Activated CD4-positive, alpha-beta memory T cell treated with anti-CD3 and anti-CD28 coated beads for 36 hours (primary cell): ENCODE measurements at regions of chr14 and their contacts with region 1.

Region 1: DNA sequence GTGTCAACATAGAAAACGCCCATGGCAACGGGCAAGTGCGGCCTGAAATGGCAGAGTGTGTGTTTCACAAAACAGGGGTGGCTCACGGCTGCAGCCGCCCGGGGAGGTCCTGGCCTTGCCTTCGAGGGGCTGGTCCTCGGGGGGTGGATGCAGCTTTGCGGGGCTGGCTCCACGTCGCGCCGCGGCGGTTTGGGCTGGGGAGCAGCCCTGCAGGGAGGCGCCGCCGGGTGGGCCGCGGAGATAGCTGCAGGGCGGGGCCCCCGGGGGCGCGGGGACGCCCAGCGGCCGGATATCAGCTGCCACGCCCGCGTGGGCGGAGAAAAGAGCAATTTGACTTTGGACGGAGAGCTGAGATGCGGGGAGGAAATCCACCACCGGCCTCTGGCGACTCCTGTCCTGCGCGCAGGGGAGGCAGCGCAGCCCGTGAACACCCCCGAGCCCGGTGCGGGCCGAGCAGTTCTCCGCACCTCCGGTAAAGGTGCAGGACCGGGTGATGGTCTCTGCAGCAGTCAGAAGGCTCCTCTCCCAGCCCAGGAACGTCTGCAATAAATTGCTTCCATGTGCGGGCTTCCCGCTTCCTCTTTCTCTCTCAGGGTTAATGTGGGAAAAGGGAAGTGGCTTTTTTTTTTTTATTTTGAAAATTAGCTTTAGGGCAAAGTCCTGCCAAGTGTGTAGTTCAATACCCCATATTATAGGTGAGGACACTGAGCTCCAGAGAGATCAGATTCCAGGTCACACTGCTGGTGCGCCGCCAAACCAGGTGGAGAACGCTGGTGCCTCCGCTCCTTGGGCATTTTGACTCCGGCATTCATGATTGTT is 110.5 kb downstream of the ARF6 start:
- DNase-seq: peak; percentile 91
- H3K4me3 Mint-ChIP-seq: peak overlapping the region; percentile 71
- H3K27ac Mint-ChIP-seq: peak overlapping the region; percentile 95
- H3K4me1 Mint-ChIP-seq: peaks cover 49% of the 10 kb centered on the region
- H3K27me3 Mint-ChIP-seq: no peaks in the 10 kb centered on the region

Region 2: DNA sequence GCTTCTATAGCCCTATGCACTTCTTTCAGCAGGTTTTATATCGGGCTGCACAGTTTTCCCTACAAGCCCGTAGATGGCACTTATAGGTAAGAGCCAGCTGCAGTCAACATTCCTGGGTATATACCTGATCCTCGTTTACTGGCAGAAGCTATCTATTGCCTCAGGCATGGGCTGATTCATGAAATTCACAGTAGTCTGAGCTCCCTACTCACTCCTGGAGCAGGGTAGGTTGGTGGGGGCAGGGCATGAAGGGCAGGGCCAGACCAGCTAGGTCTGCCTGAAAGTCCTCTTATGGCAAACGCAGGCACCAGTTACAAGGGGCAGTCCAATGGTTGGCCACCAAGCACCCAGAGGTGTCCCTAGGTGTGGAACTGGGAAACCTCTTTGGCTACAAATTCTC is 763.0 kb before region 1 on chr14:
- CTCF ChIA-PET with region 1: no interaction called
- POLR2A ChIA-PET with region 1: no interaction called
- intact Hi-C with region 1: no loop called
- DNase-seq: no peak
- H3K4me3 Mint-ChIP-seq: no peak overlapping the region
- H3K27ac Mint-ChIP-seq: no peak overlapping the region
- H3K4me1 Mint-ChIP-seq: no peaks in the 10 kb centered on the region
- H3K27me3 Mint-ChIP-seq: peaks cover 1% of the 10 kb centered on the region

Region 3: DNA sequence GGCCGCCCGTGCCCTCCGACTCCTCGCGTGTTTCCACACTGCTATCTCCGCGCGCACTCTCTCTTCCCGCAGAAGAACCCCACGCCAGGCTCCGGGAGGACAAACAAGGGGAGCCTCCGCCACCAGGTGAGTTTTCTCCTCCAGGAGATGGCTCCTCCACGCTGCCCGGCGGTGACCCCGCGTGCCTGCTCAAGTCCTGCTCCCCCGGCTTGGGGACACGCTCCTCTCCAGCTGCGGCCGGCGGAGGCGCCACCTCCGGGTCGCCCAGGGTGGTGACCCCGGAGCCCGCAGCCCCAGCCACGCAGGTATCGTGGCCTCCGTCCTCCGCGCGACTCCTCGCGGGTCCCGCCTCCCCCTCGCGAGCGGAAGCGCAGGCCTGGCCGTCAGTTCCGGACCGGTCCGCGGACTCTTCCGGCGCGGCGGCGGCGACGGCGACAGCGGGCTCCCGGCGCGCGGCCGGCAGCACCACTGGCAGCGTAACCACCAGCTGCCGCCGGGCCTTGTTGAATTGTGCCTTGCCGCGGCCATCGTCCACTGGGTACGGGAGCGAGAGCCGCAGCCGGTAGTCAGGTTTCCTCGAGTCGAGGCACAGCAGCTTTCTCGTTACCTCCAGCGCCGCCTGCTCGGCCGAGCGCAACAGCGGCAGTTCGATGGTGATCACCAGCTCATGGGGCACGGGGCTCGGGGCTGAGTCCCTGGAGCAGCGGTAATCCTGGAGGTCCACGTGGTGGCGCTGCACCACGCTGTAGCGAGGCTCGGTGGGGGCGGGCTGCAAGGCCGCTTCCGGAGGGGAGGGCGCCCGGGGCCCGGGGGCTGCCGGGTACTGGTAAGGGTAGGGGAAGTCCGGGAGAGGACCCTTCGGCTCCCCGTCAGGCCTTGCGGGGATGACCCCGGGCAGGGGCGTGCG is 369.5 kb before region 1 on chr14:
- CTCF ChIA-PET with region 1: no interaction called
- POLR2A ChIA-PET with region 1: interaction called, 3 read pairs
- intact Hi-C with region 1: loop called (anchors 10 kb)
- DNase-seq: peak; percentile 97
- H3K4me3 Mint-ChIP-seq: peak overlapping the region; percentile 91
- H3K27ac Mint-ChIP-seq: peak overlapping the region; percentile 95
- H3K4me1 Mint-ChIP-seq: peaks cover 42% of the 10 kb centered on the region
- H3K27me3 Mint-ChIP-seq: no peaks in the 10 kb centered on the region

Region 4: GRCh38 chr14:49879683-49880204 is 123.7 kb before region 1 on chr14:
- CTCF ChIA-PET with region 1: interaction called, 10 read pairs
- POLR2A ChIA-PET with region 1: interaction called, 5 read pairs
- intact Hi-C with region 1: loop called (anchors 1 kb)
- DNase-seq: peak; percentile 87
- H3K4me3 Mint-ChIP-seq: peak overlapping the region; percentile 12
- H3K27ac Mint-ChIP-seq: peak overlapping the region; percentile 62
- H3K4me1 Mint-ChIP-seq: peaks cover 35% of the 10 kb centered on the region
- H3K27me3 Mint-ChIP-seq: no peaks in the 10 kb centered on the region

Region 5: GRCh38 chr14:49962621-49963020 is 40.8 kb before region 1 on chr14:
- CTCF ChIA-PET with region 1: no interaction called
- POLR2A ChIA-PET with region 1: interaction called, 3 read pairs
- intact Hi-C with region 1: loop called (anchors 1 kb)
- DNase-seq: peak; percentile 90
- H3K4me3 Mint-ChIP-seq: no peak overlapping the region
- H3K27ac Mint-ChIP-seq: peak overlapping the region; percentile 61
- H3K4me1 Mint-ChIP-seq: peaks cover 43% of the 10 kb centered on the region
- H3K27me3 Mint-ChIP-seq: no peaks in the 10 kb centered on the region

Region 6: GRCh38 chr14:49992901-49993335 is 10.5 kb before region 1 on chr14:
- CTCF ChIA-PET with region 1: interaction called, 4 read pairs
- POLR2A ChIA-PET with region 1: interaction called, 38 read pairs
- intact Hi-C with region 1: loop called (anchors 1 kb)
- DNase-seq: peak; percentile 81
- H3K4me3 Mint-ChIP-seq: peak overlapping the region; percentile 65
- H3K27ac Mint-ChIP-seq: peak overlapping the region; percentile 80
- H3K4me1 Mint-ChIP-seq: peaks cover 34% of the 10 kb centered on the region
- H3K27me3 Mint-ChIP-seq: no peaks in the 10 kb centered on the region

Region 7: DNA sequence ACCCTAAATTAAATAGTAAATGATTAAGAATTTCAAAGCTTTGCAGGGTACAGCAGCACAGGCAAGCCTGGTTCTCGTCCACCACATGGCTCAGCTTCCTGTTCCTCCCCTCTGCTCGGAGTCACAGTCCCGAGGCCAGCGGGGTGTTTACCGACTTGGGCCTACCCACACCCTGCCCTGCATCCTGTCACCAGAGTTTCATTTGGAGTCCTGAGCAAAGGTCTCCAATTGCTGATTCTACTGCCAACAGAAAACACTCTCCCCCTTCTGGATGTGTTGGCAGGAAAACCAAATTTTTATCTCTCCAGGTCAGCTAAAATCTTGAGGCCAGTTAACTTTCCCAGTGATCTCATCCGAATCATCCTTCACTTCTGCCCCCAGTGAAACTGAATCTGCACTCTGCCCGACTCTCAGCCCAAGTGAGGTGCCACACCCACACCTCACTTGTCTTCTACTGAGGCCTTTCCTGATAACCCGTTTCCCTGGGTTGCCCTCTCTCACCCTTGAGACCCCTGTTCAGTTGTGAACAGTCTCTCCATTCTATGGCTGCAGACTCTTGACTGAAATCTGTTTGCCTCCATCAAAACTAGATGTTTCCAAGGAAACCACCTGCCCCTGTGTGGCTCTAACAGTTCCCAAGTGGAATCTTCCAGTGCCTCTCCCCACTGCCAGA is 41.8 kb after region 1 on chr14:
- CTCF ChIA-PET with region 1: no interaction called
- POLR2A ChIA-PET with region 1: interaction called, 262 read pairs
- intact Hi-C with region 1: no loop called
- DNase-seq: peak; percentile 90
- H3K4me3 Mint-ChIP-seq: peak overlapping the region; percentile 0
- H3K27ac Mint-ChIP-seq: peak overlapping the region; percentile 87
- H3K4me1 Mint-ChIP-seq: peaks cover 59% of the 10 kb centered on the region
- H3K27me3 Mint-ChIP-seq: no peaks in the 10 kb centered on the region

Region 8: GRCh38 chr14:50116181-50116956 is 112.9 kb after region 1 on chr14 and contains the start of gene VCPKMT:
- CTCF ChIA-PET with region 1: no interaction called
- POLR2A ChIA-PET with region 1: interaction called, 10 read pairs
- intact Hi-C with region 1: no loop called
- DNase-seq: peak; percentile 96
- H3K4me3 Mint-ChIP-seq: peak within 1 kb of the TSS; percentile 98
- H3K27ac Mint-ChIP-seq: peak within 1 kb of the TSS; percentile 95
- H3K4me1 Mint-ChIP-seq: peaks cover 37% of the 10 kb centered on the region
- H3K27me3 Mint-ChIP-seq: no peaks in the 10 kb centered on the region
- total RNA-seq, gene VCPKMT: 7.7 to 10.1 TPM